Mammary epithelial cell (primary cell): ENCODE measurements at regions of chr2 and their contacts with region 1.

Region 1: GRCh38 chr2:20225294-20226151 is 593 bp upstream of the SDC1 start:
- DNase-seq: peak; percentile 85
- H3K4me3 ChIP-seq: peak overlapping the region; percentile 48 to 91 (median 72)
- H3K27ac ChIP-seq: peak overlapping the region; percentile 77
- H3K4me1 ChIP-seq: peaks cover 27% of the 10 kb centered on the region
- H3K27me3 ChIP-seq: no peaks in the 10 kb centered on the region
- CTCF ChIP-seq: peak in 1 of 2 donors; percentile 79

Region 2: GRCh38 chr2:20179755-20180594 is 45.5 kb before region 1 on chr2:
- CTCF ChIA-PET with region 1: no interaction called
- dilution Hi-C with region 1: loop called (anchors 5 kb)
- in situ Hi-C with region 1: no loop called
- intact Hi-C with region 1: loop called (anchors 2 kb)
- DNase-seq: peak; percentile 95
- H3K4me3 ChIP-seq: no peak overlapping the region
- H3K27ac ChIP-seq: peak overlapping the region; percentile 85
- H3K4me1 ChIP-seq: peaks cover 55% of the 10 kb centered on the region
- H3K27me3 ChIP-seq: no peaks in the 10 kb centered on the region
- CTCF ChIP-seq: peak; percentile 14 to 54

Region 3: GRCh38 chr2:20207051-20207450 is 18.5 kb before region 1 on chr2:
- CTCF ChIA-PET with region 1: interaction called, 4 read pairs
- dilution Hi-C with region 1: no loop called
- in situ Hi-C with region 1: no loop called
- intact Hi-C with region 1: loop called (anchors 2 kb)
- DNase-seq: no peak
- H3K4me3 ChIP-seq: no peak overlapping the region
- H3K27ac ChIP-seq: peak overlapping the region; percentile 69
- H3K4me1 ChIP-seq: peaks cover 85% of the 10 kb centered on the region
- H3K27me3 ChIP-seq: no peaks in the 10 kb centered on the region
- CTCF ChIP-seq: no peak

Region 4: GRCh38 chr2:20212459-20212870 is 13.1 kb before region 1 on chr2:
- CTCF ChIA-PET with region 1: interaction called, 4 read pairs
- dilution Hi-C with region 1: no loop called
- in situ Hi-C with region 1: no loop called
- intact Hi-C with region 1: loop called (anchors 1 kb)
- DNase-seq: peak; percentile 96
- H3K4me3 ChIP-seq: peak overlapping the region in 2 of 3 experiments; percentile 13 to 19
- H3K27ac ChIP-seq: peak overlapping the region; percentile 90
- H3K4me1 ChIP-seq: peaks cover 100% of the 10 kb centered on the region
- H3K27me3 ChIP-seq: no peaks in the 10 kb centered on the region
- CTCF ChIP-seq: no peak

Region 5: DNA sequence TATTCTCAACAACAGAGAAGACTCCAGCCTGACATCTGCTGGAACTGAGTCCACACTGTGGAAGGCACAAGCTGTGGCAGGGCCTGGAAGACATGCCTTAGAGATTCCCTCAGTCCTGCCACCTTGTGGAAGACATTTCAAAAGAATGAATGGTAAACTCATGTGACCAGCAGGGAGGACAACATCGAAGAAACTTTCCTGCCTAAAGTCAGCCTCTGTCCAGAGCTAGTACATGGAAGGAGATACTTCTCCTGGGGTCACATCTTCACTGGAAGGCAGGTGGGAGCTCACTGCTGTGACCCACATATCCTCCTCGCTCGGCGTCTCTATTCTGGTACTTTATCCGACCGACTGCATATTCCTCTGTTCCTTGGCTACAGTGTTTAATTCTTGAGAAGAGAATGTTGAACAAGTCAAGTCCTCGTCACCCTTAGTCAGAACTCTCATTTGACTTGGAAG is 65.6 kb after region 1 on chr2:
- CTCF ChIA-PET with region 1: interaction called, 13 read pairs
- dilution Hi-C with region 1: no loop called
- in situ Hi-C with region 1: no loop called
- intact Hi-C with region 1: loop called (anchors 1 kb)
- DNase-seq: peak; percentile 80
- H3K4me3 ChIP-seq: no peak overlapping the region
- H3K27ac ChIP-seq: peak overlapping the region; percentile 27
- H3K4me1 ChIP-seq: peaks cover 19% of the 10 kb centered on the region
- H3K27me3 ChIP-seq: no peaks in the 10 kb centered on the region
- CTCF ChIP-seq: peak; percentile 79 to 82